MCF 10A (cell line): ENCODE measurements at regions of chr12 and their contacts with region 1.

Region 1: GRCh38 chr12:124767066-124767821 is 96.4 kb downstream of the SCARB1 start:
- DNase-seq: peak; percentile 65
- H3K4me3 Mint-ChIP-seq: no peak overlapping the region
- H3K27ac Mint-ChIP-seq: no peak overlapping the region
- H3K4me1 Mint-ChIP-seq: peaks cover 18% of the 10 kb centered on the region
- H3K27me3 Mint-ChIP-seq: no peaks in the 10 kb centered on the region
- CTCF ChIP-seq: peak; percentile 98

Region 2: GRCh38 chr12:124036674-124037109 is 730.6 kb before region 1 on chr12:
- CTCF ChIA-PET with region 1: interaction called, 64 read pairs
- POLR2A ChIA-PET with region 1: no interaction called
- intact Hi-C with region 1: loop called (anchors 1 kb)
- DNase-seq: peak; percentile 50
- H3K4me3 Mint-ChIP-seq: no peak overlapping the region
- H3K27ac Mint-ChIP-seq: no peak overlapping the region
- H3K4me1 Mint-ChIP-seq: no peaks in the 10 kb centered on the region
- H3K27me3 Mint-ChIP-seq: no peaks in the 10 kb centered on the region
- CTCF ChIP-seq: peak; percentile 81

Region 3: GRCh38 chr12:124369055-124369900 is 398.0 kb before region 1 on chr12:
- CTCF ChIA-PET with region 1: interaction called, 16 read pairs
- POLR2A ChIA-PET with region 1: no interaction called
- intact Hi-C with region 1: no loop called
- DNase-seq: peak; percentile 96
- H3K4me3 Mint-ChIP-seq: no peak overlapping the region
- H3K27ac Mint-ChIP-seq: peak overlapping the region; percentile 57
- H3K4me1 Mint-ChIP-seq: peaks cover 14% of the 10 kb centered on the region
- H3K27me3 Mint-ChIP-seq: no peaks in the 10 kb centered on the region
- CTCF ChIP-seq: no peak

Region 4: DNA sequence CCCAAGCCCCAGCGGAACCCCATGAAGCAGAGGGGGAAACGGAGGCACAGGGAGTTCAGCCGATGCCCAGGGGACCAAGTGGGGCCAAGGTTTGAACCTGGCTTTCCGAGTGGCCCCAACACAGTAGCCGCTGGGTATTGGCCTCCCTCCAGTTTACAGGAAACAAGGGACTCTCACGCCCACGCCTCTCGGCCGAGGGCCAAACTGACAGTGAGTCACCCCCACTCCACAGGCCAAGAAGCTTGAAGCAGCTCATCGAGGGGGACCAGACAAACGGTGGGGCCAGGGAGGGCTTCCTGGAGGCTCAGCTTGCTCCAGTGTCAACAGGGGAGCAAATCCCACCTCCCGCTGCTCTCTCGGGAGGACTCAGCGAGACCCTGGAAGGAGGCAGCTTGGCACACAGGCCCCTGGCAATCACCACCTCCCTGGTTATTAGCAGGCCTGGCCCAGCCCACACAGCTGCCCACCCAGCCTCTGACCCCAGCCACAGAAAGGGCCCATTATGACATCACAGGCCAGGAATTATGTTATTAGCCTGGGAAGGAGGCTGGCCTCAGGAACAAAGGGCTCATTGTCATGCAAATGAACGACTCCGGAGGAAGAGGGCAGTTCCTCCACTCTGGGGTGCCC is 254.5 kb before region 1 on chr12:
- CTCF ChIA-PET with region 1: interaction called, 5 read pairs
- POLR2A ChIA-PET with region 1: interaction called, 17 read pairs
- intact Hi-C with region 1: loop called (anchors 5 kb)
- DNase-seq: peak; percentile 99
- H3K4me3 Mint-ChIP-seq: peak overlapping the region; percentile 57
- H3K27ac Mint-ChIP-seq: no peak overlapping the region
- H3K4me1 Mint-ChIP-seq: peaks cover 41% of the 10 kb centered on the region
- H3K27me3 Mint-ChIP-seq: no peaks in the 10 kb centered on the region
- CTCF ChIP-seq: no peak

Region 5: GRCh38 chr12:124680863-124681778 is 86.1 kb before region 1 on chr12:
- CTCF ChIA-PET with region 1: interaction called, 5 read pairs
- POLR2A ChIA-PET with region 1: interaction called, 3 read pairs
- intact Hi-C with region 1: loop called (anchors 5 kb)
- DNase-seq: peak; percentile 91
- H3K4me3 Mint-ChIP-seq: no peak overlapping the region
- H3K27ac Mint-ChIP-seq: peak overlapping the region; percentile 18
- H3K4me1 Mint-ChIP-seq: peaks cover 46% of the 10 kb centered on the region
- H3K27me3 Mint-ChIP-seq: no peaks in the 10 kb centered on the region
- CTCF ChIP-seq: peak; percentile 40

Region 6: GRCh38 chr12:124740691-124741137 is 26.5 kb before region 1 on chr12:
- CTCF ChIA-PET with region 1: interaction called, 13 read pairs
- POLR2A ChIA-PET with region 1: interaction called, 3 read pairs
- intact Hi-C with region 1: loop called (anchors 1 kb)
- DNase-seq: peak; percentile 68
- H3K4me3 Mint-ChIP-seq: no peak overlapping the region
- H3K27ac Mint-ChIP-seq: no peak overlapping the region
- H3K4me1 Mint-ChIP-seq: peaks cover 19% of the 10 kb centered on the region
- H3K27me3 Mint-ChIP-seq: no peaks in the 10 kb centered on the region
- CTCF ChIP-seq: peak; percentile 13

Region 7: DNA sequence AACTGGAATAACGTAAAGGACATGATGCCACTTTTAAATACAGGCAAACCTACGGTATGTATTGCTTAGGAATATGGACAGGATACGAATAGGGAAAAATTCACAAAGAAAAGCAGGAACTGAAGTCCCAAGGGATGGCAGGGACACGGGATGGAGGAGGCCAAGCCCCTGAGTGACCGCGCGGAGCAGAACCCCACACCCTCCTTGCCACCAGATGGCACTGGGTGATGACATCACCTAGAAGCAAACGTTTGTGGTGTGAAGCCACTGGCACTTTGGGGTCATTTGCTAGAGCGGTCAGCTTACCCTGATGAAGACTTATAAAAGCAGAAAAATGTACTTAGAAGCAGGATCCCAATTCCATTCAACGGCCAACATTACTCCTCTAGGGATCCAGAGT is 212.3 kb after region 1 on chr12:
- CTCF ChIA-PET with region 1: no interaction called
- POLR2A ChIA-PET with region 1: no interaction called
- intact Hi-C with region 1: no loop called
- DNase-seq: no peak
- H3K4me3 Mint-ChIP-seq: no peak overlapping the region
- H3K27ac Mint-ChIP-seq: no peak overlapping the region
- H3K4me1 Mint-ChIP-seq: no peaks in the 10 kb centered on the region
- H3K27me3 Mint-ChIP-seq: no peaks in the 10 kb centered on the region
- CTCF ChIP-seq: no peak